Activated CD4-positive, alpha-beta memory T cell treated with anti-CD3 and anti-CD28 coated beads, Interleukin-2, amount 10 ng/mL, durations not matched to agents 7 days and 5 days (primary cell): ENCODE measurements at regions of chr15 and their contacts with region 1.

Region 1: DNA sequence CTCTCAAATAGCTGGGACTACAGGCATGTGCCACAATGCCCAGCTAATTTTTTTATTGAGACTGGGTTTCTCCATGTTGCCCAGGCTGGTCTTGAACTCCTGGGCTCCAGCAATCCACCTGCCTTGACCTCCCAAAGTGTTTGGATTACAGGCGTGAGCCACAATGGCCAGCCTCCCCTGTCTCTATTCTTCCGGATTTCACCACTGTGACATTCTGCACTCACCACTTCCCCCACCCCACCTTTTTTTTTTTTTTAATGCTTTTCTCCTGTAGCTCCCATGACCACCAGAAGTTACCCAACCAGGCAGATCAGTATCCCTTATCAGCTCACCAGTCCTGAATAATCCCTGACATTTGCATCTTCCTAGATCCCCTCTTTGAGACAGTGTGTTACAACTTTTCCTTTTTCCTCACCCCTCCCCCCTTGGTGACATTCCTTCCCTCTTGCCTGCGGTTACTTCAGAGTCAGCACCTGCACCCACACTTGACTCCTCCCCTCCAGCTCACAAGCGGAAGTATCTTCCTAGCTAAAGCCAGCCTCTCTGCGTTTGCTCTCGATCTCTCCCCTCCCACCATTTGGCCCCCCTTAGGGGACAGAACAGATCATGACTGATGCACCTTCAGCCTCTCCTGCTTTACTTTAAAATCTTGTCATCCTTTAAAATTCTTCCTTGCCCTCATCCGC is 13.5 kb upstream of the ZNF592 start:
- DNase-seq: peak; percentile 79
- H3K4me3 Mint-ChIP-seq: peak overlapping the region; percentile 58
- H3K27ac Mint-ChIP-seq: peak overlapping the region; percentile 98
- H3K4me1 Mint-ChIP-seq: peaks cover 57% of the 10 kb centered on the region
- H3K27me3 Mint-ChIP-seq: no peaks in the 10 kb centered on the region

Region 2: GRCh38 chr15:84658080-84658787 is 76.7 kb before region 1 on chr15 and contains the start of gene NMB:
- CTCF ChIA-PET with region 1: interaction called, 12 read pairs
- POLR2A ChIA-PET with region 1: interaction called, 10 read pairs
- DNase-seq: peak; percentile 83
- H3K4me3 Mint-ChIP-seq: peak within 1 kb of the TSS; percentile 73
- H3K27ac Mint-ChIP-seq: peak within 1 kb of the TSS; percentile 76
- H3K4me1 Mint-ChIP-seq: peaks cover 35% of the 10 kb centered on the region
- H3K27me3 Mint-ChIP-seq: no peaks in the 10 kb centered on the region
- total RNA-seq, gene NMB: 4.0 to 4.1 TPM

Region 3: GRCh38 chr15:84706409-84706808 is 28.5 kb before region 1 on chr15:
- CTCF ChIA-PET with region 1: interaction called, 5 read pairs
- POLR2A ChIA-PET with region 1: interaction called, 13 read pairs
- DNase-seq: no peak
- H3K4me3 Mint-ChIP-seq: no peak overlapping the region
- H3K27ac Mint-ChIP-seq: no peak overlapping the region
- H3K4me1 Mint-ChIP-seq: peaks cover 27% of the 10 kb centered on the region
- H3K27me3 Mint-ChIP-seq: no peaks in the 10 kb centered on the region